ENCODE measurements at regions of chr15 and their contacts with region 1.

Region 1: GRCh38 chr15:39580117-39580484 is 778 bp upstream of the THBS1 start:
- DNase-seq: peak; percentile 94 to 99 (median 98)
- ATAC-seq: peak; percentile 84 to 90
- H3K4me3 ChIP-seq: peak overlapping the region; percentile 44
- H3K27ac ChIP-seq: peak overlapping the region; percentile 61
- H3K4me1 ChIP-seq: no peaks in the 10 kb centered on the region
- H3K27me3 ChIP-seq: no peaks in the 10 kb centered on the region

Region 2: GRCh38 chr15:38817427-38818156 is 762.5 kb before region 1 on chr15:
- intact Hi-C with region 1: loop called in 2 of 4 experiments (anchors 5 to 10 kb)
- DNase-seq: peak; percentile 71 to 93 (median 90)
- ATAC-seq: peak; percentile 92
- H3K4me3 ChIP-seq: no peak overlapping the region
- H3K27ac ChIP-seq: no peak overlapping the region
- H3K4me1 ChIP-seq: no peaks in the 10 kb centered on the region
- H3K27me3 ChIP-seq: no peaks in the 10 kb centered on the region

Region 3: DNA sequence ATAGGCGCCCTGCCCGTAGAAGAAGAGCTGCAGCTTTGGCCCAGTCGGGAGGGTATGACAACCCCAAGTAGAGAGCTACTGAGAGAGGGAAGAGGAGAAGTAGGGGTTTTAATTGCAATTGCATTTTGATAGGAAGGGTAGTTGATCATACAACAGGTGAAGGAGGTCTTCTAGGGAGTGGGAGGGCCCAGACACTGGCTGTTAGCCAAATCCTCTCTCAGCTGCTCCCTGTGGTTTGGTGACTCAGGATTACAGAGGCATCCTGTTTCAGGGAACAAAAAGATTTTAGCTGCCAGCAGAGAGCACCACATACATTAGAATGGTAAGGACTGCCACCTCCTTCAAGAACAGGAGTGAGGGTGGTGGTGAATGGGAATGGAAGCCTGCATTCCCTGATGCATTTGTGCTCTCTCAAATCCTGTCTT is 408.1 kb before region 1 on chr15:
- intact Hi-C with region 1: loop called (anchors 5 kb)
- DNase-seq: peak in 2 of 3 donors; percentile 50 to 68
- ATAC-seq: peak; percentile 88 to 92
- H3K4me3 ChIP-seq: no peak overlapping the region
- H3K27ac ChIP-seq: peak overlapping the region; percentile 14
- H3K4me1 ChIP-seq: peaks cover 5% of the 10 kb centered on the region
- H3K27me3 ChIP-seq: no peaks in the 10 kb centered on the region

Region 4: GRCh38 chr15:39429898-39430357 is 150.2 kb before region 1 on chr15:
- intact Hi-C with region 1: loop called in 1 of 4 experiments (anchors 10 kb)
- DNase-seq: no peak
- ATAC-seq: no peak
- H3K4me3 ChIP-seq: no peak overlapping the region
- H3K27ac ChIP-seq: peak overlapping the region; percentile 38
- H3K4me1 ChIP-seq: peaks cover 18% of the 10 kb centered on the region
- H3K27me3 ChIP-seq: no peaks in the 10 kb centered on the region

Region 5: GRCh38 chr15:39624806-39625205 is 44.7 kb after region 1 on chr15:
- intact Hi-C with region 1: no loop called
- DNase-seq: peak; percentile 50 to 78 (median 73)
- ATAC-seq: peak; percentile 76 to 85
- H3K4me3 ChIP-seq: no peak overlapping the region
- H3K27ac ChIP-seq: peak overlapping the region; percentile 94
- H3K4me1 ChIP-seq: peaks cover 23% of the 10 kb centered on the region
- H3K27me3 ChIP-seq: no peaks in the 10 kb centered on the region

Region 6: GRCh38 chr15:39756806-39757522 is 176.9 kb after region 1 on chr15:
- intact Hi-C with region 1: loop called in 1 of 4 experiments (anchors 10 kb)
- DNase-seq: no peak
- ATAC-seq: no peak
- H3K4me3 ChIP-seq: no peak overlapping the region
- H3K27ac ChIP-seq: no peak overlapping the region
- H3K4me1 ChIP-seq: no peaks in the 10 kb centered on the region
- H3K27me3 ChIP-seq: no peaks in the 10 kb centered on the region